ENCODE measurements at regions of chr12 and their contacts with region 1.

Region 1: DNA sequence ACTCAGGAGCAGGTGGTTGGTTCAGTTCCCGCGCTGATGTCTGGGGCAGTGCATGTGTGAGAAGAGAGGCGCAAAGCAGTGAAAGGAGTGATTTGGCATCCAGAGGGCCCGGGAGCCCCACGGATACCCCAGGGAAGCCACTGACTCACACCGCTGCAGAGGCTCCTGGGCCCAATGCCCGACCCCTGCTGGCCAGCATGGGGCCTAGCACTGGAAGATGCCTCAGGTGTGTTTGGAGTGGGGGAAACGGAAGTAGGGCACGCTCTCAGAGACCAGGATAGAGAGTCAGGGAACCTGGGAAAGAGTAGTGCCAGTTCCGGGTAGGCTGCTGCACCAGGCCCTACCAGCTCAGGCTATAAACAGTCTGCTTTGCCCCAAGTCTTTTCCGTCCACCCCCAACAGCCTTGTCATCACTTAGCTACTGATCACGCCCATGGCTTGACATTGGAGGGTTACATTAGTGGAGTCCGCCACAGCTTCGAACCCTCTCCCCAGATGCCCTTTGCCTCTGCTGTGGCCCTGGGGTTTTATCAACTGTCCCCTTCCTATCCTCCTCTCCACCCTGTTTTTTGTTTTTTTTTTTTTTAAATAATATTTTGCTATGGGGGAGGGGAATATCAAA is 9.5 kb upstream of the CSAD start:
- DNase-seq: peak; percentile 65 to 80 (median 77)
- ATAC-seq: peak; percentile 94
- H3K4me3 ChIP-seq: no peak overlapping the region
- H3K27ac ChIP-seq: no peak overlapping the region
- H3K4me1 ChIP-seq: peaks cover 0 to 6% of the 10 kb centered on the region in 2 experiments; a peak in 3 of 5 replicates
- H3K27me3 ChIP-seq: no peaks in the 10 kb centered on the region
- CTCF ChIP-seq: peak; percentile 77 to 93 (median 88)
- EP300 ChIP-seq: no peak
- POLR2A ChIP-seq: peak; percentile 30; the same call in 1 of the 2 replicates
- RAD21 ChIP-seq: peak; percentile 50 to 73

Region 2: DNA sequence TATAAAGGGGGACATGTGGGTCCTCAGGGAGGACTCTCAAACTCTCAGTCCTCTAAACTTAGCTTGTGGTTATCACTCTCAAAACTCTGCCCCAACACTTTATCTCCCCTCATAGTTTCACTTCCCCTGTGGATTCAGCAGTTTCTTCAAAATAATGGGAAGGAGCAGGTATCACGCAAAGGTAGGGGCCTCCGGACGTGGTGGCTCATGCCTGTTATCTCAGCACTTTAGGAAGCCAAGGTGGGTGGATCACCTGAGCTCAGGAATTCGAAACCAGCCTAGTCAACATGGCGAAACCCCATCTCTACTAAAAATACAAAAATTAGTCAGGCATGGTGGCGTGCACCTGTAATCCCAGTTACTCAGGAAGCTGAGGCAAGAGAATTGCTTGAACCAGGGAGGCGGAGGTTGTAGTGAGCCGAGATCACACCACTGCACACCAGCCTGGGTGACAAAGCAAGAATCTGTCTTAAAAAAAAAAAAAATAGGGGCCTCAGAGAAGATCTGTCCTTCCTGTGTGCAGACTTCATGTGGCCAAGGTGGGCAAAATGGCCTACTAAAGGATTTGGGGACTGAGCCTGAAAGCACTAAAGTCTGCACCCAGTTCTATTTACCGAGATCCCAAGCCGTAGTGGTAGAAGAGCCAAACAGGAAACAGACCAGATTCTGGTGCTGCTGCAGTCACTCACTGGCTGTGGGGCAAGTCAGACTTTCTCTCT is 10.4 kb after region 1 on chr12:
- CTCF ChIA-PET with region 1: no interaction called
- POLR2A ChIA-PET with region 1: interaction called, 11 read pairs
- in situ Hi-C with region 1: no loop called
- intact Hi-C with region 1: no loop called
- DNase-seq: peak in 1 of 4 experiments; percentile 50
- ATAC-seq: peak; percentile 69
- H3K4me3 ChIP-seq: no peak overlapping the region
- H3K27ac ChIP-seq: peak overlapping the region; percentile 60
- H3K4me1 ChIP-seq: peaks cover 28 to 31% of the 10 kb centered on the region in 2 experiments; a peak in 4 of 5 replicates
- H3K27me3 ChIP-seq: no peaks in the 10 kb centered on the region
- CTCF ChIP-seq: no peak
- EP300 ChIP-seq: no peak
- POLR2A ChIP-seq: 0 out of 2 replicates have a peak, but pooled peaks have one; percentile 33
- RAD21 ChIP-seq: no peak

Measured in K562 (cell line).